ENCODE measurements at regions of chr9 and their contacts with region 1.

Region 1: DNA sequence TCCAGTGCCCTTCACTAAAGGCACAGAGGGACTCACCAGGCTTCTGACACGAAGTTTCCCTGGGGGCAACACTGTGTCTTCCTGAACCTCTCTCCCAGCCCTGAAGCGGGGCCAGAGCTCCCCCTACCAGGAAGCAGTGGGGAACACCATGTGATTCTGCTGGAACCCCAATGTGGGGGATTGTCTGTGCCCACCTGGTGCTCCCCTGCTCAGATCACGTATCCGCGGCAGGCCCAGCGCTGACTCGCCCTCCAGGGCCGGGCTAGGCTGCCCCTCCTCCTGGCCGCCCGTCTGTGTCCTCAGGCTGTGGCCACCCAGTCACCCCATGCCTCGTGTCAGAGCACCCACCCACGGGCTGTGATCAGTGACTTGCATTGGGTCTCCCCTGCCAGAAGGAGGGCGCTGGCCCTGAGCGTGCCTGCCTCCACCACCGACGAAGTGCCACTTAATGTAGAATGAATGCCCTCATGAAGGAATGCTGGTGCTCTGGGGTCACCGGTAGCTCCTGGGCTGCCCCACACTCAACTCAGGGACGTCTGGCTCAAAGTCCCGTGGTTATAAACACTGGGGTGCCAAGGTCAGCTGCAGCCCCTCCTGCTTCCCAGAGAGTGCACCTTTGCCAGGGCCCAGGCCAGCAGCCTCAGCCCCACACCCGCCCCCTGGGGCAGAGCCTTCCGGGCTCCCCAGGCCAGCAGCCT is 22.1 kb downstream of the SARDH start:
- DNase-seq: peak in 2 of 3 donors; percentile 76 to 77
- ATAC-seq: peak; percentile 13 to 15
- H3K4me3 ChIP-seq: no peak overlapping the region
- H3K27ac ChIP-seq: peak overlapping the region; percentile 43
- H3K4me1 ChIP-seq: peaks cover 7% of the 10 kb centered on the region
- H3K27me3 ChIP-seq: no peaks in the 10 kb centered on the region

Region 2: GRCh38 chr9:133417541-133418461 is 298.2 kb before region 1 on chr9 and contains the start of gene REXO4:
- intact Hi-C with region 1: loop called in 1 of 4 experiments (anchors 10 kb)
- DNase-seq: peak; percentile 84 to 93 (median 91)
- ATAC-seq: peak; percentile 95 to 96
- H3K4me3 ChIP-seq: peak within 1 kb of the TSS; percentile 70
- H3K27ac ChIP-seq: peak within 1 kb of the TSS; percentile 58
- H3K4me1 ChIP-seq: no peaks in the 10 kb centered on the region
- H3K27me3 ChIP-seq: no peaks in the 10 kb centered on the region
- total RNA-seq, gene REXO4: 11.9 to 16.3 (median 15.0) TPM

Region 3: GRCh38 chr9:133532937-133533668 is 182.9 kb before region 1 on chr9:
- intact Hi-C with region 1: loop called in 1 of 4 experiments (anchors 2 kb)
- DNase-seq: peak; percentile 80 to 93 (median 91)
- ATAC-seq: peak; percentile 7 to 56
- H3K4me3 ChIP-seq: no peak overlapping the region
- H3K27ac ChIP-seq: no peak overlapping the region
- H3K4me1 ChIP-seq: peaks cover under 1% of the 10 kb centered on the region
- H3K27me3 ChIP-seq: no peaks in the 10 kb centered on the region

Region 4: DNA sequence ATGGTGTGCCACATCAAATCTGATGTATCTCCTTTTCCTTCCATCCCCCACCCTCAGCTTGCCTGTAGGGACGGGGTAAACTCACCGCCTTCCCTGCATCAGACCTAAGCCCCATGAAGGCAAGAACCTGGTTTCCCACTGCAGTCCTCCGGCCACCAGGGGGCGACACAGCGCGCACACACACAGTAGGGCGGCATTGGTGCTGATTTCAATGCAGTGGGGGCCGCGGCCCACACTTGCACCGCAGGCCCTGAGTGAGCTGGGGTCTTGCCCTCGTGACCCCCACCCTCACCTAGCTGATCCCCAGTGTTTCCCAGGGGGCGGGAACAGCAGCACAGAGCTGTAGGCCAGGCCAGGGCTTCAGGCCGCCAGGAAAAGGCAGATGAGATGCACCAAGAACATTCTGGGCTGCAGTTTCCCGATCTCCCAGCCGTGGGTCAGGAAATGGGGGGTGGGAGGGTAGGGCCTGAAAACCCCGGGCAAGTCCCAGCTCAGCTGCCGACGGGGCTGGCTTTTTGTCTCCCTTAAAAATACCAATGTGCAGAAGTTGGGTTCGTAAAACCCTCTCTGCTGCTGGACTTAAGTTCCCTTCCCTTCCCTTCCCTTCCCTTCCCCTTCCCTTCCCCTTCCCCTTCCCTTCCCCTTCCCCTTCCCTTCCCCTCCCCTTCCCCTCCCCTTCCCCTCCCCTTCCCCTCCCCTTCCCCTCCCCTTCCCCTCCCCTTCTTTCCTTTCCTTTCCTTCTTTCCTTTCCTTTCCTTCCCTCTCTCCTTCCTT is 126.4 kb before region 1 on chr9:
- intact Hi-C with region 1: loop called in 1 of 4 experiments (anchors 5 kb)
- DNase-seq: peak in 2 of 3 donors; percentile 6 to 55
- ATAC-seq: no peak
- H3K4me3 ChIP-seq: no peak overlapping the region
- H3K27ac ChIP-seq: no peak overlapping the region
- H3K4me1 ChIP-seq: peaks cover 3% of the 10 kb centered on the region
- H3K27me3 ChIP-seq: no peaks in the 10 kb centered on the region

Measured in right cardiac atrium (tissue), 5 donors.